Esophagus muscularis mucosa (tissue), 4 donors: ENCODE measurements at regions of chr18 and their contacts with region 1.

Region 1: DNA sequence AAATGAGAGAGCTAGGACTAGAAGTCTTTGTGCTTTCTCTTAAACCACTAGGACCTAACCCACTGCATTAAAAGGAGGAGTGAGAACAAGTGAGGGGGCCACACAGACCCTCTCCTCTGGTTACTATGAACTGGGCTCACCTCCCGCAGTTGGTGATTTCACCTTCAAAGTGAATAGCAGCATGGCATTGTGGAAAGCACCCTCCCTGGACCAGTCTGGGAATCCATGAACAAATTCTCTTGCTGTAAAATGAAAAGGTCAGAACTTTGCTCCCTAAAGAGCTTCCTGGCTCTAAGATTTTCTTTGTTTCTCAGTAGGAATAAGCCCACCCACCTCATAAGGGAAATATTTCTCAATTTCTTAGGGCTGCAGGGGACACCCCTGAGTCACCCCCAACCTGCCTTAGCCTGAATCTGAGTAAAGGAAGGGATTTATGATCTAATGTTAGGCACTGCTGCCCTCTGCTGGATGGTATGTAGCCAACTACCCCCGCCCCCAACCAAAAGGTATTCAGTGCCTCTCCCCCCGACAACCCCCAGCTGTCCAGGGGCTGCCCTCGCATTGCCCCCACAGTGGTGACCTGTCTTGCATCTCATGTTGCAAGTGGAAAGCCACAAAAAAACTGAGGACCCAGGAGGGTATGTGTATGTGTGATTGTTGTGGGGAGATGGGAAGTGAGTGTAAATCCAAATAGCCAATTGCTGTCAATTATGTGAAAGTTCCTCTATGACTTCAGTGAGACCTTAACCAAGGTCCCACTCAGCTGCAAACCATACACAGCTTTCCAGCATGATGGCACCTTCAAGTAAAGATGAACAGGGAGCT is 230.9 kb upstream of the SLC14A2 start:
- DNase-seq: no peak
- H3K4me3 ChIP-seq: no peak overlapping the region
- H3K27ac ChIP-seq: no peak overlapping the region
- H3K4me1 ChIP-seq: peaks cover 2 to 8% (median 4%) of the 10 kb centered on the region in 4 donors
- H3K27me3 ChIP-seq: no peaks in the 10 kb centered on the region
- CTCF ChIP-seq: peak; percentile 47 to 60 (median 51)
- EP300 ChIP-seq: no peak
- POLR2A ChIP-seq: no peak

Region 2: GRCh38 chr18:45255197-45255890 is 129.0 kb before region 1 on chr18:
- intact Hi-C with region 1: loop called (anchors 10 kb)
- DNase-seq: no peak
- H3K4me3 ChIP-seq: no peak overlapping the region
- H3K27ac ChIP-seq: peak overlapping the region; percentile 46 to 66 (median 54)
- H3K4me1 ChIP-seq: peaks cover 23 to 61% (median 57%) of the 10 kb centered on the region in 4 donors
- H3K27me3 ChIP-seq: no peaks in the 10 kb centered on the region
- CTCF ChIP-seq: no peak
- EP300 ChIP-seq: no peak
- POLR2A ChIP-seq: no peak